ENCODE measurements at regions of chr1 and their contacts with region 1.

Region 1: DNA sequence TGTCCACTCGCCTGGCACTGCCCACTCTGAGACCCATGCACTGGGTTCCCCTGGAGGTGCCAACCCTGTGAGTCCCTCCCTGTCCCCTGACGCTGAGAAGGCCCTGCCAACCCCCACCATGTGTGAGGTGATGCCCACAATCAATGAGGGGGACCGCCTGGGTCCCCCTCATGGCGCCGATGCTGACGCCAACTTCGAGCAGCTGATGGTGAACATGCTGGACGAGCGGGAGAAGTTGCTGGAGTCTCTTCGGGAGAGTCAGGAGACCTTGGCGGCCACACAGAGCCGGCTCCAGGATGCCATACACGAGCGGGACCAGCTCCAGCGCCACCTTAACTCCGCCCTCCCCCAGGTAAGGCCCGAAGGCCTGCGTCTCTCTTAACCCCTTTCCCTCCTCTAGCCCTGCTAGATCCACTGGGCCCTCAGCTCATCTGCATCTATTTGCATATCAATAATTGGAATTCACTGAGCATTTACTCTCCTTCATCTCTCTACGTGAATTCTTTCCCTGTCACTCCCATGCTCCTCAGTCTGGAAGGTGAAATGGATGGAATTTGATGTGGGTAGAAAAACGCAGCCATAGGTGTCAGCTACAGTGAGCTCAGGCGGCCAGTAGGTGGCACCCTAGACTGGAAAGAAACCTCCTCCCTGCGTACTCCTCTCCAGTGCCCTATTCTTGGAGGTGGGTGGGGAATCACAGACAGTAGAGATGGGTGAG is 12.8 kb downstream of the PPFIA4 start:
- DNase-seq: no peak
- H3K4me3 ChIP-seq: no peak overlapping the region
- H3K27ac ChIP-seq: peak overlapping the region; percentile 12 to 76 (median 68)
- H3K4me1 ChIP-seq: peaks cover 21 to 47% (median 27%) of the 10 kb centered on the region in 4 donors
- H3K27me3 ChIP-seq: no peaks in the 10 kb centered on the region
- CTCF ChIP-seq: peak; percentile 88 to 95 (median 94)
- EP300 ChIP-seq: no peak
- POLR2A ChIP-seq: no peak

Region 2: GRCh38 chr1:203127666-203128430 is 88.8 kb after region 1 on chr1 and contains the start of gene ADORA1:
- intact Hi-C with region 1: loop called (anchors 5 kb)
- DNase-seq: no peak
- H3K4me3 ChIP-seq: peak within 1 kb of the TSS; percentile 47 to 64 (median 50)
- H3K27ac ChIP-seq: peak within 1 kb of the TSS in 3 of 4 donors; percentile 31 to 52 (median 36)
- H3K4me1 ChIP-seq: peaks cover 37 to 45% (median 43%) of the 10 kb centered on the region in 4 donors
- H3K27me3 ChIP-seq: peaks cover 0 to 47% (median 7%) of the 10 kb centered on the region in 4 donors
- CTCF ChIP-seq: peak in 1 of 3 experiments; percentile 6
- EP300 ChIP-seq: no peak
- POLR2A ChIP-seq: no peak
- total RNA-seq, gene ADORA1: 0.34 to 1.7 (median 0.80) TPM

Region 3: DNA sequence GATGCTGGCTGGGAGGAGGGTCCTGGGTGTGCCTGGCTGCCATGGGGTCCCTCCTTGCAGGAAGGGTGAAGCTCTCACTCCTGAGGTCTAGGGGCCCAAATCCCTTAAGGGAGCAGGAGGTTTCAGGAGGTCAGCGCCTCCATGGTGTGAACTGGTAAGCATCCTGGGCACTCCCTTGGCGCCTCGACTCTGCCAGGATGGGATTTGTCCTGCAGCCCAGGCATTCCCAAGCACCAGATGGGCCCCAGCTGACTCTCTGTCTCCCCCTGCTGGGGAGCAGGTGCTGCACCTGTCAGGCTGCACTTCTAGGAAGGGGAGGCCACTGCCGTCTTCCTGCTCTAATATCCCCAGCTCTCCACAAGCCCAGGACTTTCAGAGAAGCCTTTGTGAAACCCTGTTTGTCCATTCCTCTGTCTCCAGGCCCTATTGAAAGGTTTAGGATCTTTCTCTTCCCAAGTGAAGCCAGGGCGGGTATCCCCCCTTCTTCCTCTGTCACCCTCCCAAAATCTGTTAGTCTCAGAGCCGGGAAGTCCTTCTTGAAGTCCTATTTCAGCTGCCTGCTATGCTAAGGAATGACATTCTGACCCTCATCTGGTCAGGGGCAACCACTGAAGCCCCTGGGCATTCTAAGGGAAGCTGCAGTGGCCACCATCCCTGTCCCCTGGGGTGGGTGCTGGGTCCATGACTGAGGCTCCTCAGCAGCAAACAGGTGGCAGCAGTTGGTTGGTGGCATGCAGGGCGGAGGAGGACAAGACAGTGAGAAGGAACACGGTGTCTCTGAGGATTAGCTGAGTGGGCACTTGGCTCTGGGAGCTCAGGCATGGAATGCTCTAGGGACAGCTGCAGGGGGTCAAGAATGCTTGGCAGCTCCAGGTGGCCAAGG is 133.3 kb after region 1 on chr1:
- intact Hi-C with region 1: loop called (anchors 1 kb)
- DNase-seq: no peak
- H3K4me3 ChIP-seq: no peak overlapping the region
- H3K27ac ChIP-seq: no peak overlapping the region
- H3K4me1 ChIP-seq: peaks cover 0 to 7% (median 0%) of the 10 kb centered on the region in 4 donors
- H3K27me3 ChIP-seq: peaks cover 0 to 12% (median 0%) of the 10 kb centered on the region in 4 donors
- CTCF ChIP-seq: peak; percentile 77 to 84 (median 78)
- EP300 ChIP-seq: no peak
- POLR2A ChIP-seq: no peak

Region 4: DNA sequence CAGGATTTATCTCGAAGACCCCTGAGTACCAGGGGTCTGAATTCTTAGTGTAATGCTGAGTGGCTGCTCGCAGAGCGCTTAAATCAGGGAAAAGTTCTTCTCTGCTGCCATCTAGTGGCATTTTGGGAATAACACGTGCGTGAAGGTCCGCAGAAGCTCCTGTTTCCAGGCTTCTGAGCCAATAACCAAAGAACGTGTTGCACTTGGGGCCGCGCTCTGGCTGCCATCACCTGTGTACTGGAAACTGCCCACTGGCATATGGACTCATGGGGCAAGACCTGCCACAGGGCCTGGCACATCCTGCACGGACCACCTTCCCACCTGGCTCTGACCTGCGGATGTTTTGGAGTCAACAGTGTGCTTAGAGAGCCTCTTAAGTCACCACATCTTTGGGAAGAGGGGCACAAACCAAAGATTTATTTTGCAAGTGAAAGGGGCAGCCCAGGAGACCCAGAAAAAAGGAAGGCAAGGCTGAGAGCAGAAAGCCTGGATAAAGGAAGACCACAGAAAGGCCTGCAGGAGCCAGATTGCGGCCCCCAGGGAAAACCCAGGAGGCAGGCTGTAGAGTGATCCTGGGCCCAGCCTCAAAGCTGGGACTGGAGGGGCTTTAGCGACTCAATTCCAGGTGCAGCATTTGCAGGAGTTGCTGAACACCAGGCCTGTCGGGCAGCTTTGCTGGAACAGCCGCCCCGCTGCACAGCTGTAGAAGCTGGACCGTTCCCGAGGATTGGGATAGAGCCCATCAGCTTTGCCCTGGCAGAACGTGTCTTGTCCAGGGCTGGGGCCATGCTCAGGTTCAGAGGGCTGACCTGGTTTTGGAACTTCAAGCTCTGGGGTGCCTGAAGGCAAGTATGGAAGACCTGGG is 177.5 kb after region 1 on chr1:
- intact Hi-C with region 1: loop called (anchors 1 kb)
- DNase-seq: no peak
- H3K4me3 ChIP-seq: no peak overlapping the region
- H3K27ac ChIP-seq: no peak overlapping the region
- H3K4me1 ChIP-seq: peaks cover 0 to 6% (median 0%) of the 10 kb centered on the region in 4 donors
- H3K27me3 ChIP-seq: peaks cover 0 to 18% (median 0%) of the 10 kb centered on the region in 4 donors
- CTCF ChIP-seq: peak; percentile 73 to 85 (median 76)
- EP300 ChIP-seq: no peak
- POLR2A ChIP-seq: no peak